ENCODE measurements at regions of chr1 and their contacts with region 1.

Region 1: GRCh38 chr1:154558575-154559465 is at the start of gene UBE2Q1:
- DNase-seq: peak; percentile 100
- ATAC-seq: peak; percentile 95
- H3K4me3 Mint-ChIP-seq: peak within 1 kb of the TSS; percentile 93
- H3K27ac Mint-ChIP-seq: peak within 1 kb of the TSS; percentile 96
- H3K4me1 Mint-ChIP-seq: peaks cover 20% of the 10 kb centered on the region
- H3K27me3 Mint-ChIP-seq: no peaks in the 10 kb centered on the region
- total RNA-seq, gene UBE2Q1: 89.3 to 101 TPM

Region 2: DNA sequence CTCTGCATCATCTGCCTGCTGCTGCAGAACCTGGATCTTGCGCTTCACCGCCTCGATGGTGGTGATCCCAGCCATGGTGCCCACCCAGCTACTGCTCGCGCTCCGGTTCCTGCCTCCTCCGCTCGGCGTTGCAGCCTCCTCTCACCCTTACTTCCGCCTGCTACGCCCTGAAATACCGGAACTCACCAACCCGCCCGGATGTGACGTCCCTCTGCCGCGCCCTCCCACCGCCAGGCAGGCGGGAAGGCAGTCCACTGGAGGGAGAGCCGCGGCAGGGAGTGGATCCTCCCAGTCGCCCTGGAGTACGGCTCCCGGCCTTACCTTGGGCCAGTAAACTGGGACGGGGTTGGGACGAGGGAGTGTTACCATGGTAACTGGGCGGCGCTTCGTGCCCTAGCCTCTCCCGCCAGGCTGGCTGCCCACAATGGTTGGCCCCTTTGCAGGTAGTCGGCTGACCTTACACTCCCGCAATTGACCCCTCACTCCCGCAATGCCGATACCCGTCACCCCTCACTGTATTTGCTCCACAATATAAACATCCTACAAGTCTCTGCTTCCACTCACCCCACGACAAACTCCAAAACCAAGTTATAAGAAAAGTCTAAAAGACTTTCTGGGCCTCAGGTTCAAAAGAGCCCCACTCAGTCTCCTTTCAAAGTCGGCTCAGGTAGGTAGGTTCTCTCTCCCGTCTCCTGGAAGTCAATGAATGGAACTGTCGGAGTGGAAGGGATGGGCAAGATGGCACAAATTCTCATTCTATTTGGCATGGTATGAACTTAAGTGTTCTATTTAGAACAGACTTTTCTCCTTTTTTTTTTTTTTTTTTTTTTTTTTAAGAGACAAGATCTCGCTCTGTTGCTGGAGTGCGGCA is 375.5 kb before region 1 on chr1:
- CTCF ChIA-PET with region 1: no interaction called
- POLR2A ChIA-PET with region 1: no interaction called
- intact Hi-C with region 1: loop called in 1 of 2 experiments (anchors 1 kb)
- DNase-seq: peak; percentile 98
- ATAC-seq: peak; percentile 72
- H3K4me3 Mint-ChIP-seq: peak overlapping the region; percentile 99
- H3K27ac Mint-ChIP-seq: peak overlapping the region; percentile 100
- H3K4me1 Mint-ChIP-seq: peaks cover 39% of the 10 kb centered on the region
- H3K27me3 Mint-ChIP-seq: no peaks in the 10 kb centered on the region

Region 3: GRCh38 chr1:154404984-154405761 is 153.6 kb before region 1 on chr1 and contains the start of gene IL6R:
- CTCF ChIA-PET with region 1: no interaction called
- POLR2A ChIA-PET with region 1: interaction called, 3 read pairs
- intact Hi-C with region 1: loop called in 1 of 2 experiments (anchors 1 kb)
- DNase-seq: peak; percentile 85
- ATAC-seq: peak; percentile 35
- H3K4me3 Mint-ChIP-seq: peak within 1 kb of the TSS; percentile 83
- H3K27ac Mint-ChIP-seq: peak within 1 kb of the TSS; percentile 95
- H3K4me1 Mint-ChIP-seq: peaks cover 78% of the 10 kb centered on the region
- H3K27me3 Mint-ChIP-seq: no peaks in the 10 kb centered on the region
- total RNA-seq, gene IL6R: 13.1 to 14.0 TPM

Region 4: GRCh38 chr1:154431586-154432373 is 127.0 kb before region 1 on chr1:
- CTCF ChIA-PET with region 1: no interaction called
- POLR2A ChIA-PET with region 1: no interaction called
- intact Hi-C with region 1: no loop called
- DNase-seq: peak; percentile 76
- ATAC-seq: peak; percentile 83
- H3K4me3 Mint-ChIP-seq: no peak overlapping the region
- H3K27ac Mint-ChIP-seq: peak overlapping the region; percentile 58
- H3K4me1 Mint-ChIP-seq: peaks cover 56% of the 10 kb centered on the region
- H3K27me3 Mint-ChIP-seq: no peaks in the 10 kb centered on the region

Region 5: GRCh38 chr1:154663471-154664060 is 104.7 kb after region 1 on chr1:
- CTCF ChIA-PET with region 1: interaction called, 10 read pairs
- POLR2A ChIA-PET with region 1: no interaction called
- intact Hi-C with region 1: no loop called
- DNase-seq: no peak
- ATAC-seq: no peak
- H3K4me3 Mint-ChIP-seq: no peak overlapping the region
- H3K27ac Mint-ChIP-seq: no peak overlapping the region
- H3K4me1 Mint-ChIP-seq: no peaks in the 10 kb centered on the region
- H3K27me3 Mint-ChIP-seq: peaks cover 16% of the 10 kb centered on the region

Region 6: DNA sequence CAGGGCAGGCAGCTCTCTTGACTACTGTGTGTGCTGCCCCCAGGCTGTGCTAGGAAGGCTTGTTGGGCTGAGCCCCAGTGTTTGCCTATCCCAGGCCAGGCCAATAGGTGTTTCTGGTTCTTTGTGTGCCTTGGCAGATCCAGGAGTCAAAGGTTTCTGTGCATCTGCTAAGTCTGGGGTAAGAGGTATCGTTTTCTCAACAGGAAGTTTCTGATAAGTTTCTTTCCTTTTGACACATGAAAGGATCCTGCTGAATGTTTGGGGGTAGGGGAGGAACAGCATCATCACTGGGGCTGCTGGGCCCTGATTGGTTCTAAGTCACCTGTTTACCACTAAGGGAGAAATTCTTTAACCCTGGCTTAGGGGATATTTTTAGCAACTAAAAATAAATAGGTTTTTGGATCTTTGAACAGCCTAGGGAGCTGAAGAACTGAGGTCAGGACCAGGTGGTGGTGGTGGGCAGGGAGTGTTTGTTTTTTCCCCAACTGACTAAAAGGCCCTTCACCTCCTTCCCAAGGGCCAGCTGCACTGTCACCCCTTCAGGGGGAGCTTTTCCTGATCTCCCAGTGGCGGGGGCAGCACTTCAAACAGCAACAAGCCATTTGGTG is 226.2 kb after region 1 on chr1:
- CTCF ChIA-PET with region 1: no interaction called
- POLR2A ChIA-PET with region 1: no interaction called
- intact Hi-C with region 1: loop called in 1 of 2 experiments (anchors 1 kb)
- DNase-seq: peak; percentile 77
- ATAC-seq: peak; percentile 98
- H3K4me3 Mint-ChIP-seq: peak overlapping the region; percentile 35
- H3K27ac Mint-ChIP-seq: peak overlapping the region; percentile 95
- H3K4me1 Mint-ChIP-seq: peaks cover 37% of the 10 kb centered on the region
- H3K27me3 Mint-ChIP-seq: no peaks in the 10 kb centered on the region

Region 7: GRCh38 chr1:154974063-154974807 is 415.4 kb after region 1 on chr1 and contains the start of gene CKS1B:
- CTCF ChIA-PET with region 1: no interaction called
- POLR2A ChIA-PET with region 1: no interaction called
- intact Hi-C with region 1: loop called (anchors 1 kb)
- DNase-seq: peak; percentile 98
- ATAC-seq: peak; percentile 86
- H3K4me3 Mint-ChIP-seq: no peak within 1 kb of the TSS
- H3K27ac Mint-ChIP-seq: no peak within 1 kb of the TSS
- H3K4me1 Mint-ChIP-seq: peaks cover 30% of the 10 kb centered on the region
- H3K27me3 Mint-ChIP-seq: no peaks in the 10 kb centered on the region
- total RNA-seq, gene CKS1B: 190 to 196 TPM

Region 8: DNA sequence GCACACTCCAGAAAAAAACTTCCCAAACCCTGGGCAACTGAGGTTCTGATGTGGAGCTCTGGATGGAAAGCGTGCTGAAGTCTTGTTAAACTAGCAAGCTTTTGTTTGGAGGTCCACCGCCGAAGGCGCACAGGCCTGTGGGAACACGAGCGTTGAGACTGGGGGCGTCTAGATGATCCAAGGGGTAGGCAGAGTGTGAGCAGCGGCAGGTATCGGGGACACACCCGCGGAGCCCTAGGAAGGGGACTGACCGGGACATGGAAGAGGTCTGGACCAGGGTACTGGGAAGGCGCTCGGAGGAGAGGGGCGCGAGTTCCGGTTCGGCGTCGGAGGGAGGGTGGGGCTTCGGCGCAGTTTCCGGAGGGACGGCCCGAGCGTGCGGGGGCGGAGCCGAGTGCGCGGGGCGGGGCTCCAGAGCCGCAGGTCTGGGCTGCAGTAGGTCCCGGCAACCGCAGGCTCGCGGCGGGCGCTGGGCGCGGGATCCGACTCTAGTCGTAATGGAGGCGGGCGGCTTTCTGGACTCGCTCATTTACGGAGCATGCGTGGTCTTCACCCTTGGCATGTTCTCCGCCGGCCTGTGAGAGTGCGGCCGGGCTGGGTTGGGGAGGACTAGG is 576.7 kb after region 1 on chr1 and contains the start of gene SLC50A1:
- CTCF ChIA-PET with region 1: no interaction called
- POLR2A ChIA-PET with region 1: no interaction called
- intact Hi-C with region 1: loop called in 1 of 2 experiments (anchors 2 kb)
- DNase-seq: peak; percentile 97
- ATAC-seq: peak; percentile 78
- H3K4me3 Mint-ChIP-seq: peak within 1 kb of the TSS; percentile 96
- H3K27ac Mint-ChIP-seq: peak within 1 kb of the TSS; percentile 97
- H3K4me1 Mint-ChIP-seq: peaks cover 35% of the 10 kb centered on the region
- H3K27me3 Mint-ChIP-seq: no peaks in the 10 kb centered on the region
- total RNA-seq, gene SLC50A1: 50.2 to 58.0 TPM